ENCODE measurements at regions of chr10 and their contacts with region 1.

Region 1: GRCh38 chr10:26725837-26726727 is 28.6 kb downstream of the PDSS1 start:
- DNase-seq: peak; percentile 83
- H3K4me3 ChIP-seq: no peak overlapping the region
- H3K27ac ChIP-seq: no peak overlapping the region
- H3K4me1 ChIP-seq: peaks cover 0 to 11% (median 6%) of the 10 kb centered on the region in 6 donors
- H3K27me3 ChIP-seq: no peaks in the 10 kb centered on the region
- CTCF ChIP-seq: peak; percentile 34 to 87 (median 71)
- POLR2A ChIP-seq: no peak

Region 2: GRCh38 chr10:26334932-26335573 is 391.0 kb before region 1 on chr10:
- intact Hi-C with region 1: loop called (anchors 10 kb)
- DNase-seq: peak; percentile 83
- H3K4me3 ChIP-seq: peak overlapping the region in 7 of 8 donors; percentile 15 to 64 (median 37)
- H3K27ac ChIP-seq: peak overlapping the region in 4 of 8 donors; percentile 24 to 82 (median 60)
- H3K4me1 ChIP-seq: peaks cover 0 to 21% (median 9%) of the 10 kb centered on the region in 6 donors
- H3K27me3 ChIP-seq: no peaks in the 10 kb centered on the region
- CTCF ChIP-seq: peak; percentile 48 to 93 (median 81)
- POLR2A ChIP-seq: no peak

Region 3: GRCh38 chr10:26879740-26880139 is 153.7 kb after region 1 on chr10:
- intact Hi-C with region 1: loop called (anchors 5 kb)
- DNase-seq: no peak
- H3K4me3 ChIP-seq: no peak overlapping the region
- H3K27ac ChIP-seq: no peak overlapping the region
- H3K4me1 ChIP-seq: peaks cover 0 to 7% (median 1%) of the 10 kb centered on the region in 6 donors
- H3K27me3 ChIP-seq: peaks cover 0 to 19% (median 0%) of the 10 kb centered on the region in 7 donors
- CTCF ChIP-seq: no peak
- POLR2A ChIP-seq: no peak

Measured in spleen (tissue), 13 donors.